ENCODE measurements at regions of chr1 and their contacts with region 1.

Region 1: GRCh38 chr1:88683541-88684481 is at the start of gene PKN2:
- DNase-seq: peak; percentile 92 to 98 (median 97)
- ATAC-seq: peak; percentile 87 to 90
- H3K4me3 Mint-ChIP-seq: peak within 1 kb of the TSS; percentile 92 to 99 (median 97)
- H3K27ac Mint-ChIP-seq: peak within 1 kb of the TSS; percentile 95 to 99 (median 97)
- H3K4me1 Mint-ChIP-seq: peaks cover 20 to 44% (median 24%) of the 10 kb centered on the region in 4 donors
- H3K27me3 Mint-ChIP-seq: no peaks in the 10 kb centered on the region
- polyA plus RNA-seq, gene PKN2: 5.3 to 8.6 (median 7.6) TPM

Region 2: GRCh38 chr1:88655685-88656299 is 28.0 kb before region 1 on chr1:
- POLR2A ChIA-PET with region 1: interaction called, 19 read pairs
- DNase-seq: peak in 3 of 10 donors; percentile 49 to 50 (median 50)
- ATAC-seq: no peak
- H3K4me3 Mint-ChIP-seq: no peak overlapping the region
- H3K27ac Mint-ChIP-seq: no peak overlapping the region
- H3K4me1 Mint-ChIP-seq: peaks cover 0 to 8% (median 3%) of the 10 kb centered on the region in 4 donors
- H3K27me3 Mint-ChIP-seq: peaks cover 0 to under 1% (median 0%) of the 10 kb centered on the region in 5 donors

Region 3: DNA sequence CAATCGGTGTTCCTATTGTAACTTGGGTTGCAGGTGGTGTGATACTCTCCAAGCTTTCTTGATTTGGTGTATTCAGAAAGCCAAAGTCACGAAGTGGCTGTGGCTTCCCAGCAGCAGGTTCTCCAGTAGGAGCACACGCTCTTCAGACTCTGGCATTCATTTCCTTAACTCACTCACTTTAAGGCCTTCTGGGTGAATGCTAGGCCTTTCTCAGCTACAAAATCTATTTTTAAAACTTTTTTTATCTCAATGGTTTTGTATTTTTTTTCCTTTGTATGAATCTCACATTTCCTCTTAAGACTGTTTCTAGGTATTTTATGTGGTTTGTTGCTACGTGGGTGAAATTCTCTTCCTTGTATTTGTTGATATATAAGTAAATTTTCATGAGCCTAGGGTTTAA is 22.6 kb before region 1 on chr1:
- POLR2A ChIA-PET with region 1: interaction called, 19 read pairs
- DNase-seq: peak in 3 of 10 donors; percentile 20 to 46 (median 42)
- ATAC-seq: peak; percentile 70 to 78
- H3K4me3 Mint-ChIP-seq: peak overlapping the region; percentile 21 to 81 (median 68)
- H3K27ac Mint-ChIP-seq: peak overlapping the region; percentile 43 to 89 (median 76)
- H3K4me1 Mint-ChIP-seq: peaks cover 6 to 24% (median 19%) of the 10 kb centered on the region in 4 donors
- H3K27me3 Mint-ChIP-seq: no peaks in the 10 kb centered on the region

Region 4: DNA sequence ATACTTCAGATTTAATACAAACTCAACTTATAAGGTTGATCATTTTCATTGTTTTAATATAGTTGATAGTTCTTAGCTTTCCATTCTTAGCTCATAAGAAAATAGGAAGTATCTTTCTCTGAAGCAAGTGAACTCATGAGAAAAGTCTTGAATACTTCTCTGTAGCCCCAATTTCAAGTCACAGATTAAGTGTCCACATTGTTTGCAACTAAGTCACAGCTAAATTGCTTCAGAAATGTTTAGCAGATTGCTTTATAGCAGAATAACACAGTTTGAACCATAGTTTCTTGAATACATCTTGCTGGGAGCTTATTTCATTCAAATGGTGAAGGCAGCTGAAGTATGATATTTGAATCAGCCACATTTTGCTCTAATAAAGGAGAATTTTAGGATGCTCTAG is 10.4 kb before region 1 on chr1:
- POLR2A ChIA-PET with region 1: interaction called, 17 read pairs
- DNase-seq: no peak
- ATAC-seq: no peak
- H3K4me3 Mint-ChIP-seq: no peak overlapping the region
- H3K27ac Mint-ChIP-seq: no peak overlapping the region
- H3K4me1 Mint-ChIP-seq: peaks cover 0 to 2% (median 0%) of the 10 kb centered on the region in 4 donors
- H3K27me3 Mint-ChIP-seq: peaks cover 0 to 4% (median 1%) of the 10 kb centered on the region in 5 donors

Region 5: GRCh38 chr1:88891318-88891950 is 207.6 kb after region 1 on chr1 and contains the start of gene GTF2B:
- POLR2A ChIA-PET with region 1: interaction called, 35 read pairs
- DNase-seq: peak; percentile 83 to 98 (median 96)
- ATAC-seq: peak; percentile 84 to 86
- H3K4me3 Mint-ChIP-seq: peak within 1 kb of the TSS; percentile 93 to 99 (median 97)
- H3K27ac Mint-ChIP-seq: peak within 1 kb of the TSS; percentile 92 to 99 (median 98)
- H3K4me1 Mint-ChIP-seq: peaks cover 24 to 46% (median 43%) of the 10 kb centered on the region in 4 donors
- H3K27me3 Mint-ChIP-seq: peaks cover 0 to 4% (median 0%) of the 10 kb centered on the region in 5 donors
- polyA plus RNA-seq, gene GTF2B: 43.1 to 56.8 (median 45.1) TPM